Activated naive CD4-positive, alpha-beta T cell treated with anti-CD3 and anti-CD28 coated beads for 36 hours (primary cell): ENCODE measurements at regions of chr9 and their contacts with region 1.

Region 1: DNA sequence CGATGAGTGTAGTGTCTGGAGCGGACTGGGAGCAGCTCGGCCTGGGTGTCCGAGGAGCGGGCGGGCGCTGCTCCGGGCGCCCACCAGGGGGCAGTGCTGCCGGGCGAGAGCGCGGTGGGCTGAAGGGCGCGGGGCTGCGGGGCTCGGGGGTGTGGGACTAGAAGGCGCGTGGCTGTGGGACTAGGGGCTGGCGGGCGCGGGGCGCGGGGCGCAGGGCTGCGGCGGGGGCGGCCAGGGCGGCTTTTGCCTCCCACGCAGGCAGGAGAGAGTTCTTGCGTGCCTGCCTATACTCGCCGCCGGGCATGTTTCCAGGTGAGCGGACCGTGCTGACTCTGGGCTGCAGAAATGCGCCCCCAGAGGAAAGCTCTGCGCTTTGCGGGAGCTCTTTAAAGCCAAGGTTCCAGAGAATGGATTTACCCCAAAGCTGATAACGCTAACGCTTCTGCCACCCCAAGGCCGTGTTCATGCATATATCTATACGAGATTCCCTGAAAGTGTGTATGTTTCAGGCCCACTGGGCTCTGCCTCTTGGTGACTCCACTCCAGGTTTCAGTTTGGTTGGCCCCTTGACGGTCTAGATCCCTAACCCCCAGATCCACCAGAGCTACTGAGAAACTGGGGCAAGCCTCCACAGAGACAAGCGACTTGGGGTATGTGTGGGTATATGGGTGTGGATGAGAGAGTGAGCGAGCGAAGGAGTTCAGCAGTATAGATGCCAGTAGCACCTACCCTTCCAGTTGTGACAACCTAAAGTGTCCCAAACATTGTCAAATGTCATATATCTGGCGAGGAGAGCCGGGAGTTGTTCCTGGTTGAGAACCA is 56.2 kb downstream of the ACER2 start:
- DNase-seq: peak; percentile 69
- H3K4me3 Mint-ChIP-seq: peak overlapping the region; percentile 81
- H3K27ac Mint-ChIP-seq: no peak overlapping the region
- H3K4me1 Mint-ChIP-seq: peaks cover 9% of the 10 kb centered on the region
- H3K27me3 Mint-ChIP-seq: no peaks in the 10 kb centered on the region

Region 2: DNA sequence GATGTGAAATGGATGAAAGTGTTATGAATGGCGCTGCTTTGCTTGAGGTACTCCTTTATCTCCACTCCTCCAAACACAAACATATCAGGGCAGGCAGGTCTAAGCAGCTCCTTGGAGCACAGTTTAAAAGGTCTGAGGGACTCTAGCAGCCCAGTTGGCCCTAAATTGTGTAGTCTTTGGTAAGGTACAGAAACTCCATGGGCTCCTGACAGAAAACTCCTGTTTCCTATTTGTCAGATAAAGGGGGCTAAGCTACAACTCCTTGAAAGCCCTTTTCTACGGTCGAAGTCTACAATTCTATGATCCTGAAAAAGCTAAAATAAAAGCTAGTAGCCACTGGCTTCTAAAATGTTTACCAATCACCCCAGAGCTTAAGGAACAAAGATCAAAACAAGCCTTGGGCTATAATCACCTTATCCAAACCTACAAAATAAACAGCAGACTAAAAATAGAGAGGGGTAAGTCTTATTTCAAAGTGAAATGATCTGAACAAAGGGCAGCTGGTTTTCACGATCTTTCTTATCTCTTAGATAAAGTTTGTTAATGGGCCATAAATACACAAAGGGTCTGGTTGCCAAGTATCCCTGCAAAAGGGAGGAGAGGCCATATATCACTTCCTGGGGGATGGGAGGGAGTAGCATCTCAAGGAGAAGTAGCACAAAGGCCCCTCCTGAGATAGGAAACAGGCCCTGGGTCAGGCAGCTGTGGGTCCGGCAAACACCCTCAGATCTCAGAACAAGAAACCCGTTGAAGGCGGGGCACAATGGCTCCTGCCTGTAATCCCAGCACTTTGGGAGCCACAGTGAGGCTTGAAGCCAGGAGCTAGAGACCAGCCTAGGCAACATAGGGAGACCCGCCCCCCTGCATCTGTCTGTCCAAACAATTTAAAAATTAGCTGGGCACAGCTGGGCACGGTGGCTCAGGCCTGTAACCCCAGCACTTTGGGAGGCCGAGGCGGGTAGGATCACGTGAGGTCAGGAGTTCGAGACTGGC is 262.8 kb before region 1 on chr9:
- CTCF ChIA-PET with region 1: interaction called, 10 read pairs
- intact Hi-C with region 1: no loop called
- DNase-seq: no peak
- H3K4me3 Mint-ChIP-seq: no peak overlapping the region
- H3K27ac Mint-ChIP-seq: no peak overlapping the region
- H3K4me1 Mint-ChIP-seq: no peaks in the 10 kb centered on the region
- H3K27me3 Mint-ChIP-seq: no peaks in the 10 kb centered on the region

Region 3: DNA sequence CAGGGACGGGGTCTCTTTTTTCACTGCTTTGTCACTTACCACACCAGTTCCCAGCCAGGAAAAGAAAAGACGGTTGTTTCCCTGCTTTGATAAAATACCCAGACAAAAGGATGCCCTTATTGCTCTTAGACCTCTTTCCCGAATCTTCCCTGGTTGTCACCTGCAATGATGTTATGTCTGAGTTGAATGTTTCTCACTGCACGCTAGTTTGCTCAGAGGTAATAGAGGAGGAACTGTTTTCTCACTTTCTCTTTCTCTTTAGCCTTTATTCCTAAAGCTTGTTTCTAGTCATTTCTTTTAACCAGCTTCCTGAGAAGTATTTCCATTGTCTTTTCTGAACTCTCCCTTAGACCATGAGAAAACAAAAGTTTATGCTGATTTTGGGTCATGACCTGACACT is 23.2 kb before region 1 on chr9:
- CTCF ChIA-PET with region 1: interaction called, 10 read pairs
- intact Hi-C with region 1: no loop called
- DNase-seq: no peak
- H3K4me3 Mint-ChIP-seq: peak overlapping the region; percentile 45
- H3K27ac Mint-ChIP-seq: peak overlapping the region; percentile 40
- H3K4me1 Mint-ChIP-seq: peaks cover 17% of the 10 kb centered on the region
- H3K27me3 Mint-ChIP-seq: no peaks in the 10 kb centered on the region

Region 4: DNA sequence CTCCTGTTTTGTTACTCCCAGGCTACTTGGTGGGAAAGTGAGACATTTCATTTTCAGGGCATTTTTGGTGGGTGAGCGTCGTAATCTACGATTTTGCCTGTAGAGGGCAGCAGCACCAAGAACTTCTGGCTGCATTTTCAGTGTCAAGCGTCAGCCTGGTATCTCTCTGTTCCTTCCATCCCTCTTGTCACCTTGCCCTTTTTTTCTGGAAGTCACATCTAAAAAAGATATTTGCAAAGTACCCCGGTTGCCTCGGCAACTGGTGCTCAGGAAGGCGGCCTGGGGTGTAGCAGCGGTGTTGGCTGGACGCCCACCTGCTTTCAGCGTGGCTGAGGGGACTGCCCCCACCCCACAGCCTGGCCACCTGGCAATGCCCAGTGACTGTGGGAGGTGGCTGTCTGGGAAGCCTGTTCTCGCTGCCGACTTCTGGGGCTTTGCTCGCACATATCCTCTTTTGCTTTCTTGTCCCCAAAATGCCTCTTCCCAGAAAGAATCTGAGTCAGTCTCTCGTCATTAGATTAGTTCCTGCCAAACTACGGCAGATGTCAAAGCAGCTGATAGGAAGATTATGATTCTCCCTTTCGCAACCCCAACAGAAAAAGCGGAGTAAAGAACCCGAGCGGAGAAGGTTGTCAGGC is 28.3 kb after region 1 on chr9:
- CTCF ChIA-PET with region 1: interaction called, 15 read pairs
- intact Hi-C with region 1: no loop called
- DNase-seq: peak; percentile 68
- H3K4me3 Mint-ChIP-seq: peak overlapping the region; percentile 16
- H3K27ac Mint-ChIP-seq: peak overlapping the region; percentile 33
- H3K4me1 Mint-ChIP-seq: peaks cover 20% of the 10 kb centered on the region
- H3K27me3 Mint-ChIP-seq: peaks cover 5% of the 10 kb centered on the region